PC-9 (cell line): ENCODE measurements at regions of chr5 and their contacts with region 1.

Region 1: GRCh38 chr5:41843456-41844370 is 26.5 kb downstream of the OXCT1 start:
- DNase-seq: peak; percentile 35 to 50
- H3K4me3 ChIP-seq: no peak overlapping the region
- H3K27ac ChIP-seq: no peak overlapping the region
- H3K4me1 ChIP-seq: no peaks in the 10 kb centered on the region
- H3K27me3 ChIP-seq: no peaks in the 10 kb centered on the region
- CTCF ChIP-seq: peak; percentile 96

Region 2: DNA sequence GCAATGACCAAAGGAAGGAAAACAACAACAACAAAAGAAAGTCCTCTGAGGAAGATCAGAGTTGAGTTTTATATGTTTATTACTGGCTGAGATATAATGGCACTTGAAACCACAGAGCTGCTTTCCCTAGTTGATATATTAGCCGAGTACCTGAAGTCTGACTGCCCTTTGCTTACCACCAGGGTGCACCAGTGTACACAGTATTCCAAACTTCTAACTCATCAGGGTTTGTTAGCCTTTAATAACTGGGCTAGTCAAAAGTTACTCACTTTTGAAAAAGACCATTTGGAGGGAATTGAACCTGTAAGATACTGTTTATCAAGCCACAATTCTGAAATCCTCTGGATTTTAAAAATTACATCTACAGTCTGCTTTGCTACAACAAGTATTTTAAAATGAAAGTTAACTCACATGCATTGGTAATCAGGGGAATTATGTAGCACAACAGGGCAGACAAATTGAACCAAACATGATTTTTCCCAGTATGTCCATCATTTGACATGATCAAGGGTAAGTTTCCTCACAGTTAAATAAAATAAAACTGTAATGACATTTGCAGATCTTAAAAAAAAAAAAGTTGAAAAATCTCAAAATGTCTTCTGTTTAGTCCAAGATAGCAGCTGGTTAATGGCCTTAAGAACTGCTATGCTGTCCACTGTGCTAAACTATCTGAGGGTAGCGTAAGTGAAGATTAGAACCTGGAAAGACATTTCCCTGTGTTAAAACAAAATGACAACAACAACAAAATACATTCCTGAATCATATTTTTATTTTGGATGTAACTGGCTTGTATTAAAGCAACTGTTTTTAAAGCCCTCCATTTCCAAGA is 573.1 kb before region 1 on chr5:
- CTCF ChIA-PET with region 1: no interaction called
- POLR2A ChIA-PET with region 1: no interaction called
- intact Hi-C with region 1: loop called (anchors 1 kb)
- DNase-seq: peak; percentile 41
- H3K4me3 ChIP-seq: no peak overlapping the region
- H3K27ac ChIP-seq: no peak overlapping the region
- H3K4me1 ChIP-seq: no peaks in the 10 kb centered on the region
- H3K27me3 ChIP-seq: no peaks in the 10 kb centered on the region
- CTCF ChIP-seq: peak; percentile 83

Region 3: GRCh38 chr5:41346609-41347008 is 497.1 kb before region 1 on chr5:
- CTCF ChIA-PET with region 1: no interaction called
- POLR2A ChIA-PET with region 1: no interaction called
- intact Hi-C with region 1: loop called (anchors 5 kb)
- DNase-seq: no peak
- H3K4me3 ChIP-seq: no peak overlapping the region
- H3K27ac ChIP-seq: no peak overlapping the region
- H3K4me1 ChIP-seq: no peaks in the 10 kb centered on the region
- H3K27me3 ChIP-seq: no peaks in the 10 kb centered on the region
- CTCF ChIP-seq: no peak

Region 4: GRCh38 chr5:41524174-41524573 is 319.5 kb before region 1 on chr5:
- CTCF ChIA-PET with region 1: no interaction called
- POLR2A ChIA-PET with region 1: no interaction called
- intact Hi-C with region 1: loop called (anchors 5 kb)
- DNase-seq: no peak
- H3K4me3 ChIP-seq: no peak overlapping the region
- H3K27ac ChIP-seq: no peak overlapping the region
- H3K4me1 ChIP-seq: peaks cover 17% of the 10 kb centered on the region
- H3K27me3 ChIP-seq: no peaks in the 10 kb centered on the region
- CTCF ChIP-seq: peak; percentile 41; the same call in 1 of the 2 replicates

Region 5: GRCh38 chr5:41707853-41708603 is 135.7 kb before region 1 on chr5:
- CTCF ChIA-PET with region 1: interaction called, 5 read pairs
- POLR2A ChIA-PET with region 1: no interaction called
- intact Hi-C with region 1: loop called (anchors 1 kb)
- DNase-seq: no peak
- H3K4me3 ChIP-seq: no peak overlapping the region
- H3K27ac ChIP-seq: no peak overlapping the region
- H3K4me1 ChIP-seq: no peaks in the 10 kb centered on the region
- H3K27me3 ChIP-seq: no peaks in the 10 kb centered on the region
- CTCF ChIP-seq: peak; percentile 66

Region 6: GRCh38 chr5:41787265-41787664 is 56.4 kb before region 1 on chr5:
- CTCF ChIA-PET with region 1: interaction called, 20 read pairs
- POLR2A ChIA-PET with region 1: no interaction called
- intact Hi-C with region 1: no loop called
- DNase-seq: no peak
- H3K4me3 ChIP-seq: no peak overlapping the region
- H3K27ac ChIP-seq: no peak overlapping the region
- H3K4me1 ChIP-seq: peaks cover 14% of the 10 kb centered on the region
- H3K27me3 ChIP-seq: no peaks in the 10 kb centered on the region
- CTCF ChIP-seq: no peak

Region 7: DNA sequence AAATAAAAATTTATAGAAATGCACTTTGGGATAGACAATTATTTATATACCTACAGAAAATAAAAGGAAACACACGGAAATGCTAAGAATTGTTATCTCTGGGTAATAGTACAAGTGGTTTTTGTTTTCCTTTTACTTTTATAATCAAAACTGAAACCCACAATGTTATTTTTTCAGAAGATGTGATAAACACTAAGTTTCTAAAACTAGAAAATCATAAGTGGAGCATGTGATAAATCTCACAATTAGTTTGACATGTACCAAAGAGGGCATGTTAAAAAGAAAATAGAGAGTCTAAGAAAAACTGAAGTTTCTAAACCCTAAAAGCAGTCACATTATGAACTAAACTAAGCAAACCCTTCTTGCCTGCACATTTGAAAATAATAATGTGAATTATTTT is 34.6 kb before region 1 on chr5:
- CTCF ChIA-PET with region 1: no interaction called
- POLR2A ChIA-PET with region 1: interaction called, 13 read pairs
- intact Hi-C with region 1: no loop called
- DNase-seq: no peak
- H3K4me3 ChIP-seq: no peak overlapping the region
- H3K27ac ChIP-seq: no peak overlapping the region
- H3K4me1 ChIP-seq: no peaks in the 10 kb centered on the region
- H3K27me3 ChIP-seq: no peaks in the 10 kb centered on the region
- CTCF ChIP-seq: no peak